GM13977 (cell line): ENCODE measurements at regions of chr19 and their contacts with region 1.

Region 1: GRCh38 chr19:6737284-6738046 is at the start of gene GPR108:
- DNase-seq: peak; percentile 99
- CTCF ChIP-seq: no peak

Region 2: DNA sequence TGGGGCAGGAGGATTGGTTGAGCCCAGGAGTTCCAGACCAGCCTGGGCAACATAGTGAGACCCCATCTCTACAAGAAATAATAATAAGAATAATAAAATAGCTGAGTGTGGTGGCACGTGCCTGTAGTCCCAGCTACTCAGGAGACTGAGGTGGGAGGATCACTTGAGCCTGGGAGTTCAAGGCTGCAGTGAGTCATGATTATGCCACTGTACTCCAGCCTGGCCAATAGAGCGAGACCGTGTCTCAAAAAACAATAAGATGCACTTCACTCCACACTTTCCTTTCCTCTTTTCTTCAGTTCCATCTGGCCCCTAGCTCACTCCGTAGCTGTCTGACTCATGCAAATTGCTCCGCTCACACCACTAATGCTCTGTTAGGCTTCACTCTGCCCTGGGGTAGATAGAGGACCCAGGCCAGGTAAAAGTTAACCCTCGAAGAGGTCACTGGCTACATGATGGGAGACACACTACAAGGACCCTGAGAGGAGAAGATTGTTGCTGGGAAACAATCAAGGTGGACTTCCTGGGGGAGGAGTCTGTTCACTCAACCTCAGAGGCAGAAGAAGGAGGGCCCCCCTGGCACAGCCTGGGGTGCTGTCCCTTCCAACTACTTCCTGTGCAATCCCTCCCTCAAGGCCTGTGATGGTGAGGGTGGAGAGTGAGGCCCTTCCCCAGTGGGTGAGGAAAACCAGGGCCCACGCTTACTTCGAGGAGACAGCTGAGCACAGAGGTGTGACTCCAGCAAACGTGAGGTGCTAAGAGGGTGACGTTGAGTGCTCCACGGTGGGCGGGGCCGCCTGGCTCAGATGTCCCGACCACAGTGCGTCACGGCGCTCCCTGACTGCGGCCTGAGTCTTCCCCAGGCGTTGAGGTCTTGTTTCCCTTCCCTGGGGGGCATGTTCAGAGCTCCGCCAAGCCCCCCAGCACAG is 215.5 kb before region 1 on chr19:
- in situ Hi-C with region 1: loop called (anchors 10 kb)
- DNase-seq: no peak
- CTCF ChIP-seq: no peak